ENCODE measurements at regions of chr2 and their contacts with region 1.

Region 1: GRCh38 chr2:174341286-174341994 is 6.7 kb downstream of the SP9 start:
- DNase-seq: peak; percentile 91
- H3K4me3 Mint-ChIP-seq: peak overlapping the region; percentile 63
- H3K27ac Mint-ChIP-seq: peak overlapping the region; percentile 89
- H3K4me1 Mint-ChIP-seq: peaks cover 44% of the 10 kb centered on the region
- H3K27me3 Mint-ChIP-seq: peaks cover 84% of the 10 kb centered on the region

Region 2: DNA sequence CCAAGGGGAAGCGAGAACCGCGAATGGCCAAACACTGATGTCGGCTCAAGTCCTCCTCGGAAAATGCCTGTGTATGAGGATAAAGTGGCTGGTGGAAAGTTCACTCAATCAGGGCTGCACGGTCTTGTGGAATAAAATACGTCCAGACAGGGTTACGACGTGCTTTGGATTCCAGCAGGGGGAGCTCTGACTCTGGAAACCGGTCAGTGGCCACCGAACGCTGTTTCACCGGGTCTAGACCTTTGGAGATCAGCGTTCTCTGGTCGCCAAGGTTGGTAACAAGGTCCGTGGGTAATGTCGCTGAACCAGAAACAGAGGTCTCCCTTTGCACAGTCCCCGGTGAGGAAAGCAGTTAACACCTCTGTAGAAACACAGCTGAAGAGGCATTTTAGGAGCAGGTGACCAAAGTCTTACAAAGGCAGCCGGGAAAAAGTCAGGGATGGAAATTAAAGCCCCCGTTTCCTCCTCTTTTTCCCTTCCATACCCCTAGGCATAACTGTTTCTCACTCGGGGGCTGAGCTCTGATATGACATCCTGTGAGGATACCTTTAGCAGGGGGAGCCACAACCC is 939.0 kb before region 1 on chr2:
- CTCF ChIA-PET with region 1: interaction called, 14 read pairs
- DNase-seq: peak; percentile 82
- H3K4me3 Mint-ChIP-seq: no peak overlapping the region
- H3K27ac Mint-ChIP-seq: no peak overlapping the region
- H3K4me1 Mint-ChIP-seq: peaks cover 6% of the 10 kb centered on the region
- H3K27me3 Mint-ChIP-seq: peaks cover 50% of the 10 kb centered on the region

Region 3: DNA sequence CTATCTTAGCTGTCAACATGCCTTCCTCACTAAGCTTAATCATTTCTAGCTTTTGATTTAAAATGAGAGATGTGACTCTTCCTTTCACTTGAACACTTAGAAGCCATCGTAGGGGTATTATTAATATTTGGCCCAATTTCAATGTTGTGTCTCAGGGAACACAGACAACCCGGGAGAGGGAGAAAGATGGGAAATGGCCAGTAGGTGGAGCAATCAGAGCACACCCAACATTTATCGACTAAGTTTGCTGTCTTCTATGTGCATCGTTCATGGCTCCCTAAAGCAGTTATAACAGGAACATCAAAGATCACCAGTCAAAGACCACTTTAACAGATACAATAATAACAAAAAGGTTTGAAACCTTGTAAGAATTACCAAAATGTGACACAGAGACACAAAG is 203.3 kb before region 1 on chr2:
- CTCF ChIA-PET with region 1: interaction called, 10 read pairs
- DNase-seq: no peak
- H3K4me3 Mint-ChIP-seq: no peak overlapping the region
- H3K27ac Mint-ChIP-seq: no peak overlapping the region
- H3K4me1 Mint-ChIP-seq: no peaks in the 10 kb centered on the region
- H3K27me3 Mint-ChIP-seq: no peaks in the 10 kb centered on the region

Region 4: GRCh38 chr2:174326161-174327020 is 15.0 kb before region 1 on chr2:
- CTCF ChIA-PET with region 1: interaction called, 10 read pairs
- DNase-seq: no peak
- H3K4me3 Mint-ChIP-seq: peak overlapping the region; percentile 63
- H3K27ac Mint-ChIP-seq: peak overlapping the region; percentile 68
- H3K4me1 Mint-ChIP-seq: peaks cover 32% of the 10 kb centered on the region
- H3K27me3 Mint-ChIP-seq: peaks cover 100% of the 10 kb centered on the region

Measured in activated naive CD4-positive, alpha-beta T cell treated with anti-CD3 and anti-CD28 coated beads, Interleukin-2, amount 10 ng/mL, durations not matched to agents 7 days and 5 days (primary cell).